ENCODE measurements at regions of chr20 and their contacts with region 1.

Region 1: DNA sequence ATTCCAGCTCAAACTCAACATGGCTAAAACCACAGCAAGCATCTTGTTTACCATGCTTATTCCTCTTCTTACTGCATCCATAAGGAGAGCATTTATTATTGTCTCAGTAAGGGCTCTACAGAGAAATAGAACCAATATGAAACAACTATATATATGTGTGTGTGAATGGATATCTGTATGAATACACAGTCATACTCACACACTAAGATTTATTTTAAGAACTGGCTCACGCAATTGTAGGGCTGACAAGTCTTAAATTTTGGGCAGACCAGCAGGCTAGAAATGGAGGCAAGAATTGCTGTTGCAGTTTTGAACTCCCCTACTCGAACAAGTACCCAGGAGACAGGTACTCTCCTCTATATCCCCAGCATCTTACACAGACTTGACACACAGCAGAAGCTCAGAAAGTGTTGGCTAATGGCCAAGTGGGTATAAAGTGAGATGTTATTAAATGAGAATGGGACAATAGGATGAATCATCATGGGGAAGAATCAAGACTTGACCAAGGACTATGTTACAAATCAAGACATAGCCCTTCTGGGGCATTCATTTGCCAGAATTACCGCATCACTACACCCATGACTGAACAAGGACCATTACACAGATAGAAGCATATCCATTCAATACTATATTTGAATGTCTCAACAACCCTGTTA is 13.0 kb downstream of the ZHX3 start:
- DNase-seq: no peak
- H3K4me3 ChIP-seq: no peak overlapping the region
- H3K27me3 ChIP-seq: no peaks in the 10 kb centered on the region
- CTCF ChIP-seq: no peak

Region 2: GRCh38 chr20:41293269-41294037 is 11.1 kb before region 1 on chr20:
- CTCF ChIA-PET with region 1: interaction called, 14 read pairs
- POLR2A ChIA-PET with region 1: no interaction called
- DNase-seq: no peak
- H3K4me3 ChIP-seq: no peak overlapping the region
- H3K27me3 ChIP-seq: no peaks in the 10 kb centered on the region
- CTCF ChIP-seq: no peak